HepG2 (cell line): ENCODE measurements at regions of chr12 and their contacts with region 1.

Region 1: DNA sequence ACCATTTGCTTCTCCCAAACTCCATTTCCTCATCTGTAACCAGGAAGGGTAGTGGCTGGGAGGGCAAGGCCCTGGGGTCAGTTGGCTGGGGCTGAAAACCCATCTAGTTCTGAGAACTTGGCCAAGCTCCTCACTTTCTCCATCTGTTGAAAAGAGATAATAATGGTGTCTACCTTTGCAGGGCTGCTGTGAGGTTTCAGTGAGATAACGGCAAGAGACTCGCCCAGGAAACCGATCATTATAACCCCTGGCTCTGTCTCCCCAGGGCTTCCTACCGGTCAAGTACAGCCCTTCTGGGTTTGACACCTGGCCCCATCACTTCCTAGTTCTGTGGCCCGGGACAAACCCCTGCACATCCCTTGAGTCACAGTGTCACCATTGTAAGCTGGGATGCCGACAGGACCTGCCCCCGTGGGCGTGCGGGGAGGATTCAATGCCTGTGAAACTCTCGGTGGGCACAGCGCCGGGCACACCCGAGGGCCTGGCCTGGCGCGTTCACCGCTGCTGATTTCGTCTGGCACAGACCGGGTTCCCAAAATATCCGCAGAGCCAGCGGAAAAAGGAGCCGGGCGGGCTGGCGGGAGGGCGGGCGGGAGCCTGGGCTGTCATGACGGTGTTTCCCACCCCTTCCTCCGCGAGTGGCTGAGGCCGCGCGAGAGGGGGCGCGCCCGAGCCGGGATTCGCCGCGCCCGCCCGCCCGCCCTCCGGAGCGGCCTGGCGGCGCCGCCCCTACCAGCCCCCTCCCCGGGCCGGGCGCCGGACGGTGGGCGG is 4.4 kb downstream of the KMT5A start:
- DNase-seq: peak; percentile 58
- ATAC-seq: peak; percentile 34
- H3K4me3 ChIP-seq: peak overlapping the region; percentile 78 to 85 (median 81)
- H3K27ac ChIP-seq: peak overlapping the region; percentile 64
- H3K4me1 ChIP-seq: peaks cover 48% of the 10 kb centered on the region
- H3K27me3 ChIP-seq: no peaks in the 10 kb centered on the region
- CTCF ChIP-seq: peak; percentile 28; the same call in 1 of the 2 replicates
- EP300 ChIP-seq: no peak
- POLR2A ChIP-seq: no peak; a peak in 1 of 4 replicates
- RAD21 ChIP-seq: no peak

Region 2: GRCh38 chr12:123200414-123200813 is 187.9 kb before region 1 on chr12:
- CTCF ChIA-PET with region 1: no interaction called
- POLR2A ChIA-PET with region 1: no interaction called
- in situ Hi-C with region 1: no loop called
- intact Hi-C with region 1: no loop called
- DNase-seq: no peak
- ATAC-seq: no peak
- H3K4me3 ChIP-seq: no peak overlapping the region
- H3K27ac ChIP-seq: no peak overlapping the region
- H3K4me1 ChIP-seq: no peaks in the 10 kb centered on the region
- H3K27me3 ChIP-seq: no peaks in the 10 kb centered on the region; a peak in 1 of 5 replicates
- CTCF ChIP-seq: no peak
- EP300 ChIP-seq: no peak
- POLR2A ChIP-seq: no peak
- RAD21 ChIP-seq: no peak

Region 3: DNA sequence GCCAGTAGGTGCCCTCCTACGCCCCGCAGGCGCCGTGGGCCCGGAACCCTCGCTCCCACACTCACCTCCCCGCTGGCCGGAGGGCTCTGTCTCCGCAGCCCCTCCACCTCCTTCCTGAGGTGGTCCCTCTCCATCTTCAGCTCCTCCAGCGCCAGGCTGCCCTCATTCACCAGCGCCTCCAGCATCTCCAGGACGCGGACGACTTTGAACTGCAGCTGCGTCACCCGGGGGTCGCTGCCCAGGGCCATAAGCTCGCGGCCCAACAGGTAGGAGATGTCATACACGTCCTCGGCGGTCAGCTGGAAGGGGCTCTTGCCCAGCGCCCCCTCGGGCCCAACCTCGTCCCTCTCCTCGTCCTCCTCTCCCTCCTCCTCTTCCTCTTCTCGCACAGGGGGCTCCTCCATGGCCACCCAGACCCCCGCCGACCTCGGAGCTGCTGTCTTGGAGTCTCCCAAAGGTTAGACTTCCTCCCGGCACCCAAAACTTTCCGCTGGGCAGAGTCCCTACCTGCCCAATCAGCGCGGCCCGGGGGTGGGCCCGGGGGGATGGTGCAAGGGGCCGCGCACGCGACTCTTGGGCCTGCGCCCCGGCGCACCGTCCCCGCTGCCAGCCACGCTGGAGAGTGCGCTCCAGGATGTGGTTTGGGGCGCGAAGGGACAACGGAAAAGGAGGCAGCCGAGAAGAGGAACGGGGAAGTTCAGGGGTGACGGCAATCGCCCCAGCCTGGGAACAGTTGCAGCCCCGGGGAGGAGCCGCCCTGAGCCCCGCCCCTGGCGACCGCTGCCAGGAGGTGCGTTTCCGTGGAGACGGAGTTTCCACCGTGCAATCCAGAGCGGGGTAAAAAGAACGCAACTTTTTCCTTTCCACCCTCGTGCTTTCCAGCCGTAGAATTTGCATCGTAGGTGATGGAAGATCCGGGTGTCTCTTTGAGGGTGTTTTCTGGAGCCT is 47.9 kb after region 1 on chr12 and contains the start of gene RILPL2:
- CTCF ChIA-PET with region 1: no interaction called
- POLR2A ChIA-PET with region 1: interaction called, 5 read pairs
- in situ Hi-C with region 1: no loop called
- intact Hi-C with region 1: loop called (anchors 1 kb)
- DNase-seq: peak; percentile 49
- ATAC-seq: peak; percentile 92
- H3K4me3 ChIP-seq: peak within 1 kb of the TSS; percentile 73 to 92 (median 90)
- H3K27ac ChIP-seq: peak within 1 kb of the TSS; percentile 64
- H3K4me1 ChIP-seq: peaks cover 27% of the 10 kb centered on the region
- H3K27me3 ChIP-seq: no peaks in the 10 kb centered on the region
- CTCF ChIP-seq: peak; percentile 19; the same call in 1 of the 2 replicates
- EP300 ChIP-seq: no peak
- POLR2A ChIP-seq: peak; percentile 37 to 42; a peak in 3 of 4 replicates
- RAD21 ChIP-seq: no peak
- total RNA-seq, gene RILPL2: 8.1 and 9.1 TPM in 2 replicates